Dendritic cell treated with granulocyte-macrophage colony-stimulating factor and Interleukin-4, amounts not matched to agents 40 ng/mL and 50 ng/mL, for 4 days (primary cell): ENCODE measurements at regions of chr7 and their contacts with region 1.

Region 1: DNA sequence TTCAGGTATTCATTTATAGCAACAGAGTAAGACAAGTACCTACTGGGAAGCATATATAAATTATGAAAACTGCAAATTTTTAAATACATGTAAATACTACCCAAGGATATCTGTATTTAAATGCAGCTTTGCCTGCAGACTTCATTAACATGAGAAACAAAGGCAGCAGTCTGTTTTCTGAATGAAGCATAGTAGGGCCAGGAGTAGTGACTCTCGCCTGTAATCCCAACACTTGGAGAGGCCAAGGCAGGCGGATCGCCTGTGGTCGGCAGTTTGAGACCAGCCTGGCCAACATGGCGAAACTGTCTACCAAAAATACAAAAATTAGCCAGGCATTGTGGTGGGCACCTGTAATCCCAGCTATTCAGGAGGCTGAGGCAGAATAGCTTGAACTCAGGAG is 42.5 kb upstream of the PHF14 start:
- H3K4me3 Mint-ChIP-seq: no peak overlapping the region
- H3K27ac Mint-ChIP-seq: no peak overlapping the region
- H3K4me1 Mint-ChIP-seq: no peaks in the 10 kb centered on the region
- H3K27me3 Mint-ChIP-seq: no peaks in the 10 kb centered on the region

Region 2: DNA sequence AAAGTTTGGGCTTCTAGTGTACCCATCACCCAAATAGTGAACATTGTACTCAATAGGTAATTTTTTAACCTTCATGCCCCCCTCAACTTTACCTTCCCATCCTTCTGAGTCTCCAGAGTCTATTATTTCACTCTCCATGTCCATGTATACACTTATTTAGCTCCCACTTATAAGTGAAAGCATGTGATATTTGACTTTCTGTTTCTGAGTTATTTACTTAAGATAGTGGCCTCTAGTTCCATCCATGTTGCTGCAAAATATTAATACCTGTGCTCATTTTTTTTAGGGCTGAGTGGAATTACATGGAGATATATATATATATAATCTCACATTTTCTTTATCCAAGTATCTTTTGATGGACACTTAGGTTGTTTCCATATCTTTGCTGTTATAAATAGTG is 21.4 kb after region 1 on chr7:
- intact Hi-C with region 1: loop called (anchors 1 kb)
- H3K4me3 Mint-ChIP-seq: no peak overlapping the region
- H3K27ac Mint-ChIP-seq: no peak overlapping the region
- H3K4me1 Mint-ChIP-seq: no peaks in the 10 kb centered on the region
- H3K27me3 Mint-ChIP-seq: no peaks in the 10 kb centered on the region